ENCODE measurements at regions of chr11 and their contacts with region 1.

Region 1: GRCh38 chr11:46808799-46809431 is 37.2 kb downstream of the CKAP5 start:
- DNase-seq: peak; percentile 31 to 69
- ATAC-seq: peak; percentile 94 to 95
- H3K4me3 ChIP-seq: no peak overlapping the region
- H3K27ac ChIP-seq: no peak overlapping the region
- H3K4me1 ChIP-seq: peaks cover 7% of the 10 kb centered on the region; the same call in 1 of the 3 replicates
- CTCF ChIP-seq: peak; percentile 67
- EP300 ChIP-seq: no peak
- POLR2A ChIP-seq: no peak
- RAD21 ChIP-seq: peak; percentile 59 to 66; a peak in 4 of 5 replicates

Region 2: GRCh38 chr11:46826310-46827044 is 17.6 kb after region 1 on chr11:
- CTCF ChIA-PET with region 1: interaction called, 14 read pairs
- POLR2A ChIA-PET with region 1: no interaction called
- DNase-seq: peak; percentile 54 to 67
- ATAC-seq: peak; percentile 99 to 100
- H3K4me3 ChIP-seq: peak overlapping the region; percentile 51
- H3K27ac ChIP-seq: peak overlapping the region; percentile 31 to 74; a peak in 3 of 6 replicates
- H3K4me1 ChIP-seq: peaks cover 44% of the 10 kb centered on the region
- CTCF ChIP-seq: no peak
- EP300 ChIP-seq: no peak
- POLR2A ChIP-seq: no peak
- RAD21 ChIP-seq: no peak

Region 3: GRCh38 chr11:47186076-47186936 is 377.4 kb after region 1 on chr11 and contains the start of gene PACSIN3:
- CTCF ChIA-PET with region 1: no interaction called
- POLR2A ChIA-PET with region 1: interaction called, 10 read pairs
- DNase-seq: peak; percentile 58 to 72
- ATAC-seq: peak; percentile 72 to 75
- H3K4me3 ChIP-seq: peak within 1 kb of the TSS; percentile 72
- H3K27ac ChIP-seq: peak within 1 kb of the TSS; percentile 84 to 98
- H3K4me1 ChIP-seq: peaks cover 47% of the 10 kb centered on the region
- CTCF ChIP-seq: no peak
- EP300 ChIP-seq: no peak
- POLR2A ChIP-seq: peak; percentile 59
- RAD21 ChIP-seq: no peak
- polyA plus RNA-seq, gene PACSIN3: 15.8 and 16.5 TPM in 2 replicates

Region 4: GRCh38 chr11:47204637-47204989 is 395.7 kb after region 1 on chr11:
- CTCF ChIA-PET with region 1: no interaction called
- POLR2A ChIA-PET with region 1: no interaction called
- DNase-seq: peak; percentile 28 to 46
- ATAC-seq: peak; percentile 83 to 85
- H3K4me3 ChIP-seq: no peak overlapping the region
- H3K27ac ChIP-seq: peak overlapping the region in 1 of 2 experiments; percentile 49; a peak in 2 of 6 replicates
- H3K4me1 ChIP-seq: peaks cover 10% of the 10 kb centered on the region
- CTCF ChIP-seq: no peak
- EP300 ChIP-seq: no peak
- POLR2A ChIP-seq: no peak
- RAD21 ChIP-seq: no peak

Measured in A549 (cell line).